Transverse colon (tissue), 4 donors: ENCODE measurements at regions of chr14 and their contacts with region 1.

Region 1: DNA sequence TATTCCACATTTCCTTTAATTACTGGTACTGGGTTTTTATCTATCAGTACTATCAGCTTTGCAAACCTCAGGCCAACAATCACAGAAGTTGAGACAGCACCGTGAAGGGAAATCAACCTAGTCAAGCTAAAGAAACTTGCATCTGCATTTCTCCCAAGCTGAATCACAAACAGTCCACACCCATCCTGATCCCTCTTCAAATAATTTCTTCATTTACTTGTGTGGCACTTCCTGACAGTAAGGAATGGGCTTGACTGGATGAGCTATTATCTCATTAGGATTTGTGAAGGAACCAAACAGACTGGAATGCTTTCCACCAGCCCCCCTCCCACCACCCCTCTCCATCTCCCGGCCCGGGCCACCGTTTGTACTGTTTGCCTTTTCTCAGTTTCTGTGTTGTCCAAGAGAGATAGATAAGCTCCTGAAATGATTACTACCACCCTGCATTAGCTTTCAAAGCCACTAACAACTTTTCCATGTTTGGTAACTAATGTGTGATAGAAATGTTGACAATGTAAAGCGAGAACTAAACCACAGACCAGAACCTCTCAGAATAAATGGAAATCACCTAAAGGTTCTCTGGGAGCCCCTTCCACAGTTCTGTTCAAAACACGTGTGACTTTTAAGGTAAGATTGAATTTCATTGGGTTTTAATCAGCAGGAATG is 236.3 kb downstream of the SLC25A21 start:
- DNase-seq: no peak
- H3K4me3 ChIP-seq: no peak overlapping the region
- H3K27ac ChIP-seq: no peak overlapping the region
- H3K4me1 ChIP-seq: no peaks in the 10 kb centered on the region
- H3K27me3 ChIP-seq: peaks cover 14% of the 10 kb centered on the region
- CTCF ChIP-seq: no peak
- EP300 ChIP-seq: no peak
- POLR2A ChIP-seq: no peak

Region 2: GRCh38 chr14:36647824-36648753 is 288.1 kb before region 1 on chr14:
- in situ Hi-C with region 1: loop called in 3 of 4 experiments (anchors 10 to 25 kb)
- intact Hi-C with region 1: no loop called
- DNase-seq: no peak
- H3K4me3 ChIP-seq: peak overlapping the region in 3 of 4 donors; percentile 20 to 49 (median 42)
- H3K27ac ChIP-seq: no peak overlapping the region
- H3K4me1 ChIP-seq: peaks cover 9 to 19% (median 17%) of the 10 kb centered on the region in 4 donors
- H3K27me3 ChIP-seq: peaks cover 98% of the 10 kb centered on the region
- CTCF ChIP-seq: peak; percentile 42 to 56 (median 50)
- EP300 ChIP-seq: no peak
- POLR2A ChIP-seq: no peak